Vagina (tissue), 2 donors: ENCODE measurements at regions of chr20 and their contacts with region 1.

Region 1: DNA sequence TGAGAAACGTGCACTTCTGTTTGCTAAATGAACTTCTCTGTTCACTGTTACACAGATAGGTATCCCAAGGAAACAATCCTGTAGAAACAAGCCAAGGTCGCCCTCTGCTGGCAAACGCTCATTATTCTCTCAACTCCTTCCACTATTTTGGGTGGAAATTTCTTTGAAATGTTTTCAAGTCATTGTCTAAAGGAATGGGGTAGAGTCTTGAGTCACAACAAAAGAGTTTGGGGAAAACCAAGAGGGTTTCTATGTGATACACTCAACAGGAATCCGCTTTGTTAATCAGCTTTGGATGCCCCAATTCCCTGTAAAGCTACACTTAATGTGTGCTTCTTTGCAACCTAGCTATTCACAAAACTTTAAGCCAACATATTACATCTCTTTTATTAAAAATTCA is 4.6 kb upstream of the RAE1 start:
- DNase-seq: no peak
- H3K4me3 ChIP-seq: no peak overlapping the region
- H3K27ac ChIP-seq: no peak overlapping the region
- H3K4me1 ChIP-seq: no peaks in the 10 kb centered on the region
- H3K27me3 ChIP-seq: no peaks in the 10 kb centered on the region
- CTCF ChIP-seq: peak; percentile 43 to 82 (median 58)
- POLR2A ChIP-seq: no peak

Region 2: GRCh38 chr20:57089691-57090150 is 256.8 kb before region 1 on chr20:
- intact Hi-C with region 1: loop called (anchors 10 kb)
- DNase-seq: no peak
- H3K4me3 ChIP-seq: no peak overlapping the region
- H3K27ac ChIP-seq: no peak overlapping the region
- H3K4me1 ChIP-seq: peaks cover 15% of the 10 kb centered on the region
- H3K27me3 ChIP-seq: no peaks in the 10 kb centered on the region
- CTCF ChIP-seq: peak; percentile 72 to 88 (median 77)
- POLR2A ChIP-seq: no peak

Region 3: GRCh38 chr20:57398231-57398821 is 51.8 kb after region 1 on chr20:
- intact Hi-C with region 1: no loop called
- DNase-seq: no peak
- H3K4me3 ChIP-seq: no peak overlapping the region
- H3K27ac ChIP-seq: peak overlapping the region; percentile 33
- H3K4me1 ChIP-seq: peaks cover 61% of the 10 kb centered on the region
- H3K27me3 ChIP-seq: no peaks in the 10 kb centered on the region
- CTCF ChIP-seq: no peak
- POLR2A ChIP-seq: no peak